ENCODE measurements at regions of chr13 and their contacts with region 1.

Region 1: GRCh38 chr13:109145631-109146030 is 516.2 kb downstream of the MYO16 start:
- DNase-seq: peak in 3 of 5 donors; percentile 1 to 4 (median 3)
- H3K4me3 ChIP-seq: no peak overlapping the region
- H3K4me3 Mint-ChIP-seq: no peak overlapping the region
- H3K27ac ChIP-seq: no peak overlapping the region
- H3K27ac Mint-ChIP-seq: no peak overlapping the region
- H3K4me1 ChIP-seq: no peaks in the 10 kb centered on the region
- H3K4me1 Mint-ChIP-seq: no peaks in the 10 kb centered on the region
- H3K27me3 ChIP-seq: no peaks in the 10 kb centered on the region
- H3K27me3 Mint-ChIP-seq: peaks cover 10 to 16% of the 10 kb centered on the region in 2 donors

Region 2: GRCh38 chr13:109412283-109412901 is 266.8 kb after region 1 on chr13:
- CTCF ChIA-PET with region 1: no interaction called
- POLR2A ChIA-PET with region 1: no interaction called
- intact Hi-C with region 1: no loop called
- DNase-seq: no peak
- H3K4me3 ChIP-seq: no peak overlapping the region
- H3K4me3 Mint-ChIP-seq: no peak overlapping the region
- H3K27ac ChIP-seq: no peak overlapping the region
- H3K27ac Mint-ChIP-seq: no peak overlapping the region
- H3K4me1 ChIP-seq: no peaks in the 10 kb centered on the region
- H3K4me1 Mint-ChIP-seq: no peaks in the 10 kb centered on the region
- H3K27me3 ChIP-seq: no peaks in the 10 kb centered on the region
- H3K27me3 Mint-ChIP-seq: peaks cover 0 to 15% of the 10 kb centered on the region in 2 donors

Region 3: DNA sequence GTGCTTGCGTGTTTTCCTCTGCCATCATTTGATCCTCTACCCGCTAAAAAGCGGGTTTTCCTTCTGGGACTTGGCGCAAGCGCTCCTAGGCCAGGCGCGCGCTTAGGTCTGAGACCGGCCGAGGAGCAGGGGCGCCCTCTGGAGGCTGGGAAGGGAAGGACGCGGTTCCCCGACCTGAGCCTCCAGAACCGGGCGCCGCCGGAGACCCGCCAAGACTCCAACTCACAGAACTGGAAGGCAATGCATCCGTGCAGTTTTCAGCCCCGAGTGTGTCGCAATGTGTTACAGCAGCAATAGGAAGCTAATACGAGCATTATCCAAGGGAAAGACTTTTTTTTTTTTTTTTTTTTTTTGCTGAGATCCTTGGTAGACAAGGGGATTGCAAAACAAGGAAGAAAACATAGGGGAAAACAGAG is 970.4 kb after region 1 on chr13:
- CTCF ChIA-PET with region 1: interaction called, 5 read pairs
- POLR2A ChIA-PET with region 1: no interaction called
- intact Hi-C with region 1: loop called (anchors 5 kb)
- DNase-seq: peak in 4 of 5 donors; percentile 18 to 33 (median 25)
- H3K4me3 ChIP-seq: no peak overlapping the region
- H3K4me3 Mint-ChIP-seq: peak overlapping the region in 1 of 8 donors; percentile 60
- H3K27ac ChIP-seq: no peak overlapping the region
- H3K27ac Mint-ChIP-seq: no peak overlapping the region
- H3K4me1 ChIP-seq: no peaks in the 10 kb centered on the region
- H3K4me1 Mint-ChIP-seq: peaks cover 0 to 3% (median 0%) of the 10 kb centered on the region in 4 donors
- H3K27me3 ChIP-seq: no peaks in the 10 kb centered on the region
- H3K27me3 Mint-ChIP-seq: peaks cover 19 to 23% of the 10 kb centered on the region in 2 donors

Measured in CD4-positive, alpha-beta memory T cell (primary cell).